ENCODE measurements at regions of chr22 and their contacts with region 1.

Region 1: DNA sequence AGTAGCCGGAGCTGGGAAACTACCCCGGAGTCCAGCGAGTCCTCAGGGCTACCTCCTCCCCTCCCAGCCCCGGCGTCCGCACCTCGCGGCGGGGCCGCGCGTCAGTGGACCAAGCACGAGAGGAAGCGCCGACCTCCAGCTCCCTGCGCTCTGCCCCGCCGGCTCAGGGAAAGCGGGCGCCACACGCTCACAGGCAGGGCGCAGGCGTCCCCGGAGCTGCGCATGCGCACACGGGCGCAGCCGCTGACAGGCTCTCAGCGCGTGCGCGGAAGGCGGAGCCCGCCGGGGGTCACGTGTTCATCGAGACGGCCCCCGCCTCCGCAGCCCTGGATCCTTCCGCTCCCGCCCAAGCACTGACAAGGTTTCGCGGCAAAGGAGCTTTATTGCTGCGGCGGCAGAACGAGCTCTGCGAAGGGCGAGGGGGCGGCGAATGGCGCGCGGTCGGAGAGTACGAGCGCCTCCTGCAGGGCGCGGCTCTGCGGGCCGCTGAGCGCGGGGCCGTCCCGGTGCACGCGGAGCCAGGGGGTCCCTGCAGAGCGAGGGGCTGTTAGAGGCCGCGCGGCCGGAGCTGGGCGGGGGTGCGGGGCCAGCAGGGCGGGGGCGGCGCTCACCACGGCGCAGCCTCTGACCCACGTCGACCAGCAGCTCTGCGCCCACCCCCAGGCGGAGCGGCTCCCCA is at the start of gene SCO2:
- DNase-seq: peak; percentile 97
- total RNA-seq, gene SCO2: 2.4 TPM

Region 2: GRCh38 chr22:50190182-50190940 is 335.2 kb before region 1 on chr22:
- intact Hi-C with region 1: no loop called
- DNase-seq: peak; percentile 94

Region 3: GRCh38 chr22:50474668-50475492 is 50.6 kb before region 1 on chr22 and contains the start of gene SBF1:
- intact Hi-C with region 1: no loop called
- DNase-seq: peak; percentile 98
- total RNA-seq, gene SBF1: 63.5 TPM

Region 4: GRCh38 chr22:50562523-50563412 is 37.2 kb after region 1 on chr22 and contains the start of gene SYCE3:
- intact Hi-C with region 1: loop called (anchors 5 kb)
- DNase-seq: peak; percentile 100
- total RNA-seq, gene SYCE3: not detected

Region 5: GRCh38 chr22:50582562-50583293 is 57.2 kb after region 1 on chr22 and contains the start of gene CHKB:
- intact Hi-C with region 1: loop called (anchors 5 kb)
- DNase-seq: peak; percentile 99
- total RNA-seq, gene CHKB: 49.4 TPM

Measured in cardiac septum (tissue), 1 donor.